ENCODE measurements at regions of chr2 and their contacts with region 1.

Region 1: GRCh38 chr2:216034065-216034464 is 20.7 kb upstream of the MREG start:
- DNase-seq: peak; percentile 56 to 97
- H3K4me3 ChIP-seq: no peak overlapping the region
- H3K27ac ChIP-seq: no peak overlapping the region
- H3K4me1 ChIP-seq: peaks cover 0 to 3% (median 0%) of the 10 kb centered on the region in 4 experiments; a peak in 1 of 7 replicates
- H3K27me3 ChIP-seq: no peaks in the 10 kb centered on the region
- CTCF ChIP-seq: peak; percentile 70 to 90 (median 71)
- EP300 ChIP-seq: no peak
- POLR2A ChIP-seq: no peak
- RAD21 ChIP-seq: peak; percentile 57 to 64

Region 2: GRCh38 chr2:215933151-215933550 is 100.9 kb before region 1 on chr2:
- CTCF ChIA-PET with region 1: no interaction called
- POLR2A ChIA-PET with region 1: no interaction called
- DNase-seq: no peak
- H3K4me3 ChIP-seq: no peak overlapping the region
- H3K27ac ChIP-seq: no peak overlapping the region
- H3K4me1 ChIP-seq: peaks cover under 1 to 3% (median 2%) of the 10 kb centered on the region in 4 experiments; a peak in 4 of 7 replicates
- H3K27me3 ChIP-seq: no peaks in the 10 kb centered on the region
- CTCF ChIP-seq: no peak
- EP300 ChIP-seq: no peak
- POLR2A ChIP-seq: no peak
- RAD21 ChIP-seq: no peak

Region 3: GRCh38 chr2:216023055-216023648 is 10.9 kb before region 1 on chr2:
- CTCF ChIA-PET with region 1: interaction called, 165 read pairs
- POLR2A ChIA-PET with region 1: interaction called, 6 read pairs
- DNase-seq: peak; percentile 31 to 70
- H3K4me3 ChIP-seq: no peak overlapping the region
- H3K27ac ChIP-seq: no peak overlapping the region
- H3K4me1 ChIP-seq: no peaks in the 10 kb centered on the region
- H3K27me3 ChIP-seq: no peaks in the 10 kb centered on the region
- CTCF ChIP-seq: peak in 2 of 3 experiments; percentile 67 to 74; a peak in 3 of 4 replicates
- EP300 ChIP-seq: no peak
- POLR2A ChIP-seq: no peak
- RAD21 ChIP-seq: peak; percentile 55 to 58

Region 4: GRCh38 chr2:216057688-216058193 is 23.7 kb after region 1 on chr2:
- CTCF ChIA-PET with region 1: interaction called, 19 read pairs
- POLR2A ChIA-PET with region 1: interaction called, 3 read pairs
- DNase-seq: no peak
- H3K4me3 ChIP-seq: no peak overlapping the region
- H3K27ac ChIP-seq: no peak overlapping the region
- H3K4me1 ChIP-seq: no peaks in the 10 kb centered on the region
- H3K27me3 ChIP-seq: no peaks in the 10 kb centered on the region
- CTCF ChIP-seq: no peak
- EP300 ChIP-seq: no peak
- POLR2A ChIP-seq: no peak
- RAD21 ChIP-seq: no peak

Region 5: GRCh38 chr2:216081487-216082116 is 47.5 kb after region 1 on chr2 and contains the starts of genes PECR and TMEM169:
- CTCF ChIA-PET with region 1: interaction called, 11 read pairs
- POLR2A ChIA-PET with region 1: interaction called, 4 read pairs
- DNase-seq: peak in 1 of 2 experiments; percentile 91
- H3K4me3 ChIP-seq: peak within 1 kb of the TSS; percentile 53 to 92 (median 81)
- H3K27ac ChIP-seq: peak within 1 kb of the TSS; percentile 37; the same call in 1 of the 2 replicates
- H3K4me1 ChIP-seq: peaks cover 3 to 15% (median 14%) of the 10 kb centered on the region in 4 experiments; a peak in 5 of 7 replicates
- H3K27me3 ChIP-seq: no peaks in the 10 kb centered on the region
- CTCF ChIP-seq: peak in 1 of 3 experiments; percentile 0; a peak in 1 of 4 replicates
- EP300 ChIP-seq: no peak
- POLR2A ChIP-seq: peak; percentile 63 to 71
- RAD21 ChIP-seq: no peak
- total RNA-seq, gene PECR: 17.5 and 19.2 TPM in 2 replicates
- total RNA-seq, gene TMEM169: 2.4 and 2.5 TPM in 2 replicates

Region 6: DNA sequence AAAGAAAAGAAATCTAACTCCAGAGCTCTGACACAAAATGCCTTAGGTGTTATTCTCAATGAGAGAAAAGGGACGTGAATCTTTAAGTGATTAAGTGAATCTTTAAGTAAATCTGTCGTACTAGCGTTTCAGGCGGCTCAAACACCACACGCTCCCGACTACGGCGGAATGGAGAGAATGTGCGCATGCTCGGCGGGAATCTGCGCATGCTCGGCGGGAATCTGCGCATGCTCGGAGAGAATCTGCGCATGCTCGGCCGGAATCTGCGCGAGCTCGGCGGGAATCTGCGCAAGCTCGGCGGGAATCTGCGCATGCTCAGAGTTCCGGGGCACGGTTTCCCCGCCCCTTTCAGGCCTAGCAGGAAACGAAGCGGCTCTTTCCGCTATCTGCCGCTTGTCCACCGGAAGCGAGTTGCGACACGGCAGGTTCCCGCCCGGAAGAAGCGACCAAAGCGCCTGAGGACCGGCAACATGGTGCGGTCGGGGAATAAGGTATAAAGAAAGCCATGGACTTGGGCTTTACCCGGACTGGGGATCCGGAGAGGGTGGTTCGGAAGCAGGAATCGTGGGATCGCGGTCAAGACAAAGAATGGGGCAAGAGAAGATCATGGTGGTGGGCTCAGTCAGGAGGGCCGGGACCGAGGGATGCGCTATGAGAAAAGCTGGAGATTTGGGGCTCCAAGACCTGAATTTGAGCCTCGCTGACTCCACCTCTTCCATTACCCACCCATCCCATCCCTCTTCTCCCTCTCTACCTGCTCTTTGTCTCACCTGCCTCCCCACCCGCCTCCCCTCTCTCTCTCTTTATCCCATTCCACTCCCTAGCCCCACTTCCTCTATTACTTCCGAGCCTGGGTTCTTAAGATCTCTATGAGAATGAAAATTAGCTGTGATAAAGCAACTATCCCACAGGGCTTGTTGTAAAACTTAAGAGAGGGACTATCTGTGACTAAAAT is 75.2 kb after region 1 on chr2 and contains the start of gene XRCC5:
- CTCF ChIA-PET with region 1: interaction called, 15 read pairs
- POLR2A ChIA-PET with region 1: interaction called, 6 read pairs
- DNase-seq: peak; percentile 98
- H3K4me3 ChIP-seq: peak within 1 kb of the TSS; percentile 87 to 99 (median 97)
- H3K27ac ChIP-seq: peak within 1 kb of the TSS; percentile 92
- H3K4me1 ChIP-seq: peaks cover 4 to 12% (median 10%) of the 10 kb centered on the region in 4 experiments; a peak in 6 of 7 replicates
- H3K27me3 ChIP-seq: no peaks in the 10 kb centered on the region
- CTCF ChIP-seq: no peak
- EP300 ChIP-seq: no peak; a peak in 1 of 3 replicates
- POLR2A ChIP-seq: peak; percentile 65 to 77
- RAD21 ChIP-seq: no peak
- total RNA-seq, gene XRCC5: 597 and 644 TPM in 2 replicates

Region 7: DNA sequence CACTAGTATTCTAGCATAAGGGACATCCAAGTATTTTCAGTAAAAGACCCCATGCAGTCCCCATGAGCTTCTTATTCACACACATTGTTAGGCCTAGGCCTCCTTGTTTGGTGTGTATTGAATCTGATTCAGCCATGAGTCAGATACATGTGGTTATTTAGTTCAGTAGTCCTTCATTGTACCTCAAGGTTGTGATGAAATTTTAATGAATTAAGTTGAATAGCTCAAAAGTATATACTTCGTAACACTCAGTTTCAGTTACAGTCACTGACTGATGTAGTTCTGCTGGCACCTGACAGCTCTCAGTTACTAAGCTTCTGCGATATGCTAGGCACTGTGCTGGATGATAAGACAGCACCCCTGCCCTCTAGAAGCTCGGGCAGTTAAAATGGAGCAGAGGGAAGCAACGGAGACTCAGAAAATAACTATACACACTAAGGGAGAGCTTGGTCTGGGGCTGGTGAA is 161.5 kb after region 1 on chr2:
- CTCF ChIA-PET with region 1: no interaction called
- POLR2A ChIA-PET with region 1: no interaction called
- DNase-seq: no peak
- H3K4me3 ChIP-seq: no peak overlapping the region
- H3K27ac ChIP-seq: no peak overlapping the region
- H3K4me1 ChIP-seq: peaks cover 0 to 9% (median 5%) of the 10 kb centered on the region in 4 experiments; a peak in 5 of 7 replicates
- H3K27me3 ChIP-seq: no peaks in the 10 kb centered on the region
- CTCF ChIP-seq: no peak
- EP300 ChIP-seq: no peak
- POLR2A ChIP-seq: no peak
- RAD21 ChIP-seq: no peak